ENCODE measurements at regions of chr16 and their contacts with region 1.

Region 1: GRCh38 chr16:2768403-2769089 is 8.5 kb downstream of the ELOB start:
- DNase-seq: no peak
- ATAC-seq: no peak
- H3K4me3 ChIP-seq: no peak overlapping the region
- H3K4me3 Mint-ChIP-seq: peak overlapping the region in 1 of 3 donors; percentile 51
- H3K27ac ChIP-seq: no peak overlapping the region
- H3K27ac Mint-ChIP-seq: peak overlapping the region in 1 of 2 donors; percentile 66
- H3K4me1 ChIP-seq: peaks cover 0 to 23% of the 10 kb centered on the region in 2 experiments
- H3K4me1 Mint-ChIP-seq: peaks cover 22 to 55% (median 26%) of the 10 kb centered on the region in 3 donors
- H3K27me3 ChIP-seq: no peaks in the 10 kb centered on the region
- H3K27me3 Mint-ChIP-seq: no peaks in the 10 kb centered on the region

Region 2: DNA sequence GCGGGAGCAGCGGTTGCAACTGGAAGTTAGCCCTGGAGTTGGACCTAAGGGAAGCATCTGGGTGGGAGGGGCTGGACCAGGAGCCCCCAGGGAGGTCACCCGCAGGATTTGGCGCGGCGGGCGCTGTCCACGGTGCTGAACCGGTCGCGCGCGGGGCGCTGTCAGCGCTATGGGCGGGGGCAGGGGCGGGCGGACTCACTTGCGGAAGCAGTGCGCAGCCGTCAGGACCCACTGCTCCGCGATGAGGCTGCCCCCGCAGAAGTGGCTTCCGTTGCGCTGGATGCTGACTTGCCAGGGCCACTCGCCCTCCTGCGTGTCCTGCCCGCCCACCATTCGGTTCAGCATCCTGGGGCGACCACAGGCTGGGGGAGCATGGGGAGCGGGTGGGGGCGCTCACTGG is 53.0 kb before region 1 on chr16:
- CTCF ChIA-PET with region 1: no interaction called
- POLR2A ChIA-PET with region 1: no interaction called
- DNase-seq: peak; percentile 65 to 89 (median 80)
- ATAC-seq: peak; percentile 89 to 96 (median 92)
- H3K4me3 ChIP-seq: peak overlapping the region in 1 of 2 donors; percentile 7
- H3K4me3 Mint-ChIP-seq: peak overlapping the region in 1 of 3 donors; percentile 50
- H3K27ac ChIP-seq: no peak overlapping the region
- H3K27ac Mint-ChIP-seq: no peak overlapping the region
- H3K4me1 ChIP-seq: peaks cover 2 to 17% of the 10 kb centered on the region in 2 experiments
- H3K4me1 Mint-ChIP-seq: peaks cover 4 to 9% (median 6%) of the 10 kb centered on the region in 3 donors
- H3K27me3 ChIP-seq: peaks cover 0 to 17% of the 10 kb centered on the region in 2 experiments
- H3K27me3 Mint-ChIP-seq: no peaks in the 10 kb centered on the region

Region 3: DNA sequence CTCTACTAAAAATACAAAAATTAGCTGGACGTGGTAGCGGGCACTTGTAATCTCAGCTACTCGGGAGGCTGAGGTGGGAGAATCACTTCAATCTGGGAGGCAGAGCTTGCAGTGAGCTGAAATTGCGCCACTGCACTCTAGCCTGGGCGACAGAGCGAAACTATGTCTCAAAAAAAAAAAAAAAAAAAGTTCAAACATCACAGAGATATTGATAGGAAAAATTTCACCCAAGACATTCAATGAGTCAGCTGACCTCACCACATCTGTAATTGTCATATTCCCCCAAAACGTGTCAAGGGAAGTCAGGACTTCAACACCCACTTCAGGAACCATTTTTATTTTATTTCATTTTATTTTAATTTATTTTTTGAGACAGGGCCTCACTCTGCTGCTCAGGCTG is 40.5 kb before region 1 on chr16:
- CTCF ChIA-PET with region 1: no interaction called
- POLR2A ChIA-PET with region 1: no interaction called
- DNase-seq: no peak
- ATAC-seq: no peak
- H3K4me3 ChIP-seq: no peak overlapping the region
- H3K4me3 Mint-ChIP-seq: no peak overlapping the region
- H3K27ac ChIP-seq: no peak overlapping the region
- H3K27ac Mint-ChIP-seq: no peak overlapping the region
- H3K4me1 ChIP-seq: no peaks in the 10 kb centered on the region
- H3K4me1 Mint-ChIP-seq: no peaks in the 10 kb centered on the region
- H3K27me3 ChIP-seq: peaks cover 0 to 12% of the 10 kb centered on the region in 2 experiments
- H3K27me3 Mint-ChIP-seq: peaks cover 9 to 11% of the 10 kb centered on the region in 2 donors

Region 4: GRCh38 chr16:2752850-2753732 is 15.5 kb before region 1 on chr16:
- CTCF ChIA-PET with region 1: interaction called in 1 of 2 experiments, 5 read pairs
- POLR2A ChIA-PET with region 1: interaction called, 12 to 13 read pairs
- DNase-seq: peak in 24 of 35 experiments; percentile 17 to 76 (median 47)
- ATAC-seq: peak; percentile 33 to 40 (median 39)
- H3K4me3 ChIP-seq: peak overlapping the region; percentile 75 to 90
- H3K4me3 Mint-ChIP-seq: peak overlapping the region; percentile 91 to 93 (median 91)
- H3K27ac ChIP-seq: peak overlapping the region; percentile 98
- H3K27ac Mint-ChIP-seq: peak overlapping the region; percentile 85 to 93
- H3K4me1 ChIP-seq: peaks cover 22 to 51% of the 10 kb centered on the region in 2 experiments
- H3K4me1 Mint-ChIP-seq: peaks cover 51 to 60% (median 55%) of the 10 kb centered on the region in 3 donors
- H3K27me3 ChIP-seq: no peaks in the 10 kb centered on the region
- H3K27me3 Mint-ChIP-seq: no peaks in the 10 kb centered on the region

Measured in T-cell (primary cell).